Esophagus squamous epithelium (tissue), 5 donors: ENCODE measurements at regions of chr5 and their contacts with region 1.

Region 1: DNA sequence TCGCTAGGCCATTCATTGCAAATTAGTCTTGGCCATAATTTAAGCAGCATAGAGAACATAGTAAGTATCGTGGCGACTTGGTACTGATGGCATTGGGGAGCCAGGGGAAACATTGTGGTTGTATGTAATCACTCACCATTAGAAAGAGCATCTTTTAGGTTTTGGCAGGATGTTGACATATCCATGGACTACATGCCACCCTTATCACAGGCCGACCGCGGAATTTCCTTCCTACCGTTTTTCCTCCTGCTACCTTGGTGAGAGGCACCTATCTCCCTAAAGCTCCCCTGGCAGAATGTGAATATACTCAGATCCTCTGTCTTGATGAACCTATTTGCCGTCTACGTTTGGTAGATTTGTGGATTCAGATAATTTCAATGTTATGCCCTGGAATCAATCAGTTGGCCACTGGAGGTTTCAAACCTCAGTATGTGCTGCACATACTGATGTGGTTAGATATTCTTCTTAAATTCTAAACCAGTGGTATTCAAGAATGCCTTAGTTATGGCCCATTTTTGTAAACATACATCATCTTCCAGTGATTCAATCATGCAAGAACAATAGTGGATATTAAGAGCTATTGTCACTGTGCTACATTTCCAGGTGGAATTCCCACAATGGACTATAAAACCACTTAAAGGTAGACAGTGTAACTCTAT is 271.0 kb upstream of the HAPLN1 start:
- DNase-seq: no peak
- H3K4me3 ChIP-seq: no peak overlapping the region
- H3K27ac ChIP-seq: no peak overlapping the region
- H3K4me1 ChIP-seq: peaks cover 0 to 3% (median 0%) of the 10 kb centered on the region in 3 donors
- H3K27me3 ChIP-seq: no peaks in the 10 kb centered on the region
- CTCF ChIP-seq: no peak
- POLR2A ChIP-seq: no peak

Region 2: DNA sequence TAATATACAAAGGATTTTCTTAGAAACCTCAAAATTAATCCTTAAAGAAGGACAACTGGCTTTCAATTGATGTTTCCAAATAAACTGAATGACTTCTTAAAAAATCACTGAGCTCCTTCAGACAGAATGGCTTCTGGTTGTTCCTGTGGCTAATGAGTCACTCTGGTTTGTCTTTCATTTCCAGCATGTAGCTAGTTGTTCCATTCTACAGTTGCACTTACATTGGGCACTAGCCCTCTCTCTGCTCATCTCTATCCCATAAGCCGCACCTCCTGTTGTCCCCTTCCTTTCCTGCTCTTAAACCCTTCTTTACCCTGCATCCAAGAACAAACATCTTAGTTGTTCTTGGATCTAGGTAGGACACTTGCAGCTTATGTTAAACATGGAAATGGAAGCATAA is 35.8 kb before region 1 on chr5:
- intact Hi-C with region 1: loop called (anchors 5 kb)
- DNase-seq: no peak
- H3K4me3 ChIP-seq: no peak overlapping the region
- H3K27ac ChIP-seq: no peak overlapping the region
- H3K4me1 ChIP-seq: no peaks in the 10 kb centered on the region
- H3K27me3 ChIP-seq: no peaks in the 10 kb centered on the region
- CTCF ChIP-seq: no peak
- POLR2A ChIP-seq: no peak